AG04449 (cell line): ENCODE measurements at regions of chr1 and their contacts with region 1.

Region 1: GRCh38 chr1:40032240-40032891 is 8.2 kb upstream of the CAP1 start:
- DNase-seq: no peak
- H3K4me3 ChIP-seq: no peak overlapping the region
- CTCF ChIP-seq: peak; percentile 70

Region 2: GRCh38 chr1:39825432-39825951 is 206.9 kb before region 1 on chr1:
- CTCF ChIA-PET with region 1: interaction called, 10 read pairs
- POLR2A ChIA-PET with region 1: no interaction called
- DNase-seq: no peak
- H3K4me3 ChIP-seq: no peak overlapping the region
- CTCF ChIP-seq: no peak

Region 3: DNA sequence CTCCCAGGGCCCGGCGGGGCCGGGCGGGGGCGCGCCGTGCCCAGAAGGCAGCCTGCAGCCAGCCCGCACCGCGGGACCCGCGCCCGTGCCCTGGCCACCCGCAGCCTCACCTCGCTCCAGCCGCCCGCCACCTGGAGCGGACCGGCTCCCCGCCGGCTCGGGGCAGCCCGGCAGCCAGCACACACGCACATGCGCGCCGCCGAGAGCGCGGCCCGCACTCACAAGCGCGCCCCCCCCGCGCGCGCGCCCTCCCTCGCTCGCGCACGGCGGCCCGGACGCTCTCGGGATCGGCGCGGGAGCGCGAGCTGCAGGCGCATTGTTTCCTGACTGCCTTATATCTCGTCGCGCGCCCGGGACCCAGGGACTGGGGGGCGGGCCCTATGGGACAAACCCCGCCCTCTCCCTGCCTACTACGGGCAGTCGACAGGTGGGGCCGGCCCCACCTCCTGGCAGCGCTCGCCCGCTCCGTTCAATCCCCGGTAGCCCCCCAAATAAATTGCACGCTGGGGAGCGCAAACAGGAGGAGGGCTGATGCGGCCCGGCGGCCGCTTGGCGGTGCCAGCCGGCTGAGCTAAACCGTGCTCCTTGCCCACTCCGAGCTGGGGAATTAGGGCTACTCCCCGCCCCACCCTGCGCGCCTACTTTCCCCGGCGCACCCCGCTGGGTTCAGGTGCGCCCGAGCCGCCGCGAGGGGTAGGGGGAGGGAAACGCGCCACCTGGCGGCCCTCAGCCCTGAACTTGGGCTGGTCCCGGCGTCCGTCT is 130.5 kb before region 1 on chr1 and contains the start of gene MYCL:
- CTCF ChIA-PET with region 1: interaction called, 20 read pairs
- POLR2A ChIA-PET with region 1: no interaction called
- DNase-seq: no peak
- H3K4me3 ChIP-seq: peak within 1 kb of the TSS; percentile 63
- CTCF ChIP-seq: peak; percentile 70

Region 4: DNA sequence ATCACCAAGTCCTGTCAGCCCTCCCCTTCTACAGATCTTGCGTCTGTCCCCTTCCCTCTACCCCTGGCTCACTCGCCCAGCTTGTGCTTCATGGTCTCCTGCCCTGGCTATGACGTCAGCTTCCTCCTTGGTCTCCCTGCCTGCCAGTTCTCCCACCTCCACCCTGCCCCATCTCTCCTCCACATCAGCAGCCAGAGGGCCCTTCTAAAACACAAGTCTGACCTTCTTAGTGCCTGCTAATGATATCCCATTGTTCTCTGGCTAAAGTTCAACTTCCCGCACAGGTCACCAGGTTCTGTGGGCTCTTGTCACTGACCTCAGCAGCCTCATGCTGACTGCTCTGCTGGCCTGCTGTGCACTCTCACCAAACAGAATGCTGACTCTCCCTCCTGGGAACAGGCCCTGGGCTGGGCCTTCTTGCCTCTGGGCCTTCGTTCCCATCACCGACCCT is 106.0 kb before region 1 on chr1:
- CTCF ChIA-PET with region 1: interaction called, 185 read pairs
- POLR2A ChIA-PET with region 1: no interaction called
- DNase-seq: no peak
- H3K4me3 ChIP-seq: no peak overlapping the region
- CTCF ChIP-seq: no peak

Region 5: DNA sequence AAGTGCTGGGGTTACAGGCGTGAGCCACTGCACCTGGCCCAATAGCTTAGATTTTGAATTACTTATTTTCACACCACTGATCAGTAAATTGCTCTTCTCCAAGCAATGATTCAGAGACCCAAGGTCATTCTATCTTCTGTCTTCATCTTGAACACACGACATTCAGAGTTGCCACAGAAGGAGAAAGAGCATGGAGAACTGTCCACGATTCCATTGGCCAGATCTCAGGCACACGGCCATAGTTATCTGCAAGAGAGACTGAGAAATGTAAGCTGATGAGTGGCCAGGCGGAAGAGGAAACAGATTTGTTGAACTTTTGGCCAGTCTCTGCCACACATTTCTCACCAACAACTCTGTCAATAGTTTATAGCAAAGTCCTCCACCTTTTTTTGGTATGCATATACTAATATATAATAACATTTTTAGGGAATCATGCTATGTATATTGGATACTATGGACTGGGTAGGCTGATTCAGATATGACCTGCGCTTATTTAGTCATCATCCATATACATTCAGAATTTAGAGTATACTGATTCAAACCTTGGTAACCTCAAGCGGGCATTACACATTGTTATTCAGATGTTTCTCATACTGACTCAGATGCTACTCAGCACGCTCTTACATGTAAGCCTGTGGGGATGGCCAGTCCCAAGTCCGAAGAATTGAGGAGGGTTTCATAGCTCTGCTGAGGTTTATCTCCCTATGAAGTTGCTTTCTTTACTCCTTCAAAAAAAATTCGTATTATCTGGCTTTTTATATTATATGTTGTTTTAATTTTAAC is 17.4 kb before region 1 on chr1:
- CTCF ChIA-PET with region 1: interaction called, 81 read pairs
- POLR2A ChIA-PET with region 1: interaction called, 4 read pairs
- DNase-seq: peak; percentile 70
- H3K4me3 ChIP-seq: no peak overlapping the region
- CTCF ChIP-seq: no peak